ENCODE measurements at regions of chr22 and their contacts with region 1.

Region 1: GRCh38 chr22:37472418-37473006 is 13.7 kb downstream of the MFNG start:
- DNase-seq: peak; percentile 30 to 66 (median 37)
- H3K4me3 ChIP-seq: no peak overlapping the region
- H3K4me3 Mint-ChIP-seq: no peak overlapping the region
- H3K27ac ChIP-seq: no peak overlapping the region
- H3K27ac Mint-ChIP-seq: peak overlapping the region in 6 of 8 donors; percentile 17 to 87 (median 54)
- H3K4me1 ChIP-seq: no peaks in the 10 kb centered on the region
- H3K4me1 Mint-ChIP-seq: peaks cover 8 to 16% (median 10%) of the 10 kb centered on the region in 3 donors
- H3K27me3 ChIP-seq: no peaks in the 10 kb centered on the region
- H3K27me3 Mint-ChIP-seq: no peaks in the 10 kb centered on the region

Region 2: GRCh38 chr22:37428649-37429586 is 43.6 kb before region 1 on chr22:
- CTCF ChIA-PET with region 1: no interaction called
- POLR2A ChIA-PET with region 1: no interaction called
- DNase-seq: peak; percentile 42 to 73 (median 51)
- H3K4me3 ChIP-seq: no peak overlapping the region
- H3K4me3 Mint-ChIP-seq: peak overlapping the region in 3 of 7 donors; percentile 6 to 55 (median 32)
- H3K27ac ChIP-seq: no peak overlapping the region
- H3K27ac Mint-ChIP-seq: peak overlapping the region in 1 of 8 donors; percentile 7
- H3K4me1 ChIP-seq: peaks cover 6% of the 10 kb centered on the region
- H3K4me1 Mint-ChIP-seq: peaks cover 3 to 22% (median 6%) of the 10 kb centered on the region in 3 donors
- H3K27me3 ChIP-seq: peaks cover 31% of the 10 kb centered on the region
- H3K27me3 Mint-ChIP-seq: peaks cover 61 to 78% of the 10 kb centered on the region in 2 donors

Region 3: DNA sequence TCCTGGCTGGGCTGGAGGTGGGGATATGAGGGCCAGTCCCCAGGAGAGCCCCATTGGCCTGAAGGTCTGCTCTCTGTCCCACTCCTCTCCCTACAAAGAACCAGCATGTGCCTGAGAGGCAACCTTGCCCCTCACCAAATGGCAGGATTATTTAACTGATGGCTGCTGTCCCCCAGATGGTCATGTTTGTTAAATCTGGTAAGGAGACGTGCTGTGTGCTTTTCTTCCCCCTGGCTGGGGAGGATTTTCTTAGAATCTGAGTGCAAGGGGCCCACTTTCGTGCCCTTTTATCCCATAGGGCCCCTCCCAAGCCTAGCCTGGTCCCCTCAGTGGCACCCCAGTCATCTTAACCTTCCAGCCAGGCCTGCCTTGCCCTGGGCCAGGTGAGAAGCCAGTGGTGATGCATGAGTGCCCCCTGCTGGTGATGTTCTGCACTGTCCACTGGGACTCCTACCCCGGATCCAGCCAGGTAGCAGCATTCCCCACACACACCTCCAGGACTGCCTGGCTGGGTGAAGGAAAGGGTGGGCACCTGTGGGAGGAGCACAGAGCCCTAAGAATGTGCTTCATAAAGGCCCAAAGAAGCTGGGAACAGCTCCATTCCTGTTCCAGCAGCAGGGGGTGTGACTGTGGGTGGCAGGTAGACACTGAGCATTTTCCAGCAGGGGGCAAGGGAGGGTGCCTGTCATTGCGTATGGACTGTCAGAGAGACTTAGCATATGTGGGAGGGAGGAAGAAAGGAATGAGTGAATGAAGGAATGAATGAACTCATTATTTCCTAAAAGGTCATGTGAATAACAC is 15.2 kb before region 1 on chr22:
- CTCF ChIA-PET with region 1: interaction called, 11 read pairs
- POLR2A ChIA-PET with region 1: no interaction called
- DNase-seq: peak; percentile 64 to 86 (median 75)
- H3K4me3 ChIP-seq: no peak overlapping the region
- H3K4me3 Mint-ChIP-seq: no peak overlapping the region
- H3K27ac ChIP-seq: no peak overlapping the region
- H3K27ac Mint-ChIP-seq: no peak overlapping the region
- H3K4me1 ChIP-seq: no peaks in the 10 kb centered on the region
- H3K4me1 Mint-ChIP-seq: peaks cover 0 to 10% (median 4%) of the 10 kb centered on the region in 3 donors
- H3K27me3 ChIP-seq: no peaks in the 10 kb centered on the region
- H3K27me3 Mint-ChIP-seq: no peaks in the 10 kb centered on the region

Region 4: GRCh38 chr22:37486224-37486845 is 13.8 kb after region 1 on chr22 and contains the start of gene MFNG:
- CTCF ChIA-PET with region 1: interaction called, 71 read pairs
- POLR2A ChIA-PET with region 1: interaction called, 5 read pairs
- DNase-seq: peak; percentile 64 to 83 (median 70)
- H3K4me3 ChIP-seq: peak within 1 kb of the TSS; percentile 95
- H3K4me3 Mint-ChIP-seq: peak within 1 kb of the TSS; percentile 90 to 98 (median 94)
- H3K27ac ChIP-seq: peak within 1 kb of the TSS; percentile 76
- H3K27ac Mint-ChIP-seq: peak within 1 kb of the TSS; percentile 89 to 99 (median 98)
- H3K4me1 ChIP-seq: peaks cover 63% of the 10 kb centered on the region
- H3K4me1 Mint-ChIP-seq: peaks cover 47 to 75% (median 59%) of the 10 kb centered on the region in 3 donors
- H3K27me3 ChIP-seq: no peaks in the 10 kb centered on the region
- H3K27me3 Mint-ChIP-seq: no peaks in the 10 kb centered on the region
- total RNA-seq, gene MFNG: 162 to 171 TPM

Region 5: GRCh38 chr22:37492428-37493344 is 20.2 kb after region 1 on chr22:
- CTCF ChIA-PET with region 1: interaction called, 71 read pairs
- POLR2A ChIA-PET with region 1: no interaction called
- DNase-seq: peak; percentile 21 to 66 (median 26)
- H3K4me3 ChIP-seq: no peak overlapping the region
- H3K4me3 Mint-ChIP-seq: peak overlapping the region in 1 of 7 donors; percentile 23
- H3K27ac ChIP-seq: no peak overlapping the region
- H3K27ac Mint-ChIP-seq: peak overlapping the region in 1 of 8 donors; percentile 43
- H3K4me1 ChIP-seq: peaks cover 20% of the 10 kb centered on the region
- H3K4me1 Mint-ChIP-seq: peaks cover 10 to 38% (median 26%) of the 10 kb centered on the region in 3 donors
- H3K27me3 ChIP-seq: no peaks in the 10 kb centered on the region
- H3K27me3 Mint-ChIP-seq: peaks cover 0 to 11% of the 10 kb centered on the region in 2 donors

Region 6: GRCh38 chr22:37519268-37520195 is 47.0 kb after region 1 on chr22 and contains the start of gene CARD10:
- CTCF ChIA-PET with region 1: no interaction called
- POLR2A ChIA-PET with region 1: no interaction called
- DNase-seq: peak in 1 of 5 donors; percentile 15
- H3K4me3 ChIP-seq: peak within 1 kb of the TSS; percentile 28
- H3K4me3 Mint-ChIP-seq: peak within 1 kb of the TSS; percentile 60 to 84 (median 77)
- H3K27ac ChIP-seq: no peak within 1 kb of the TSS
- H3K27ac Mint-ChIP-seq: peak within 1 kb of the TSS in 2 of 8 donors; percentile 7 to 25
- H3K4me1 ChIP-seq: peaks cover 6% of the 10 kb centered on the region
- H3K4me1 Mint-ChIP-seq: peaks cover 6 to 11% (median 7%) of the 10 kb centered on the region in 3 donors
- H3K27me3 ChIP-seq: peaks cover 15% of the 10 kb centered on the region
- H3K27me3 Mint-ChIP-seq: peaks cover 23 to 44% of the 10 kb centered on the region in 2 donors
- total RNA-seq, gene CARD10: 0.29 to 0.31 TPM

Region 7: DNA sequence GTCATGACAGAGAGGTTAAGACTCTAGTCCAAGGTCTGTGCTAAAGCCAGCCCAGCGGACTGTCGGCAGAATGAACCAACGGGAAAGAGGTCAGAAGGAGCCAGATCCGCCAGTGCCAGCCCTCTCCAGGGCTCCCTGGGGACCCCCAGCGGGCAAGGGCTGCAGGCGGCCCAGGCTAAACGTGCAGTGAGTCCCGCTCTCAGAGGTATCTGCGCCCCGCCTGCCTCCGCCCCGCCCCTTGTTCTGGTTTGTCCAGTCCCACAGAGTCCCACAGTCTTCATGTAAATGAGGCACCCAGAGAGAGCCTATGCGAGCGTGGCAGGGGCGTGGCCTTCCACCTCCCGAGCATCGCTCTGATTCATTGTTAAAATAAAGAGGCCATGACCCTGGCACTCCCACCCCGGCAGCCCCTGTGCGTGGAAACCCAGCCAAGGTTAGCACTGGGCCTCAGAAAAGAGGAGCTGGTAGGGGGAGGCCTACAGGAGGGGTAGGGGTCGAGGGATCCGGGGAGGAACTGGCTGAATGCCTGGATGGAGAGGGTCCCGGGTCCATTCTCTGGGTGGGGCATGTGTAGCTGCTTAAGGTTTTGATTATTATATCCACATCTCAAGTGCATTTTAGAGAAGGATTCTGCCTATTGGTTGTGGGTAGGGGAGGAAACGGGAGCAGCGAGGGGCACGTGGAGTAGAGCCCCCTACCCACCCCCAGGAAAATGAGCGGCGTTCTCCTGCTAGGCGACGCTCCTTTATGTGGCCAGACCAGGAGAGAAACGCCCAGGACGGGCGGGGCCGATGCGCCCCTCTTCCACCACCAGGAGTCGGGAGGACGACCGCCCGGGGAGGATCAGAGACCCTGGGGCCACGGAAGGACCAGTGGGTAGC is 224.4 kb after region 1 on chr22 and contains the start of gene TRIOBP:
- CTCF ChIA-PET with region 1: no interaction called
- POLR2A ChIA-PET with region 1: no interaction called
- DNase-seq: peak; percentile 55 to 88 (median 59)
- H3K4me3 ChIP-seq: no peak within 1 kb of the TSS
- H3K4me3 Mint-ChIP-seq: peak within 1 kb of the TSS in 2 of 7 donors; percentile 26 to 38
- H3K27ac ChIP-seq: no peak within 1 kb of the TSS
- H3K27ac Mint-ChIP-seq: peak within 1 kb of the TSS in 3 of 8 donors; percentile 0 to 35 (median 22)
- H3K4me1 ChIP-seq: peaks cover 7% of the 10 kb centered on the region
- H3K4me1 Mint-ChIP-seq: peaks cover 8 to 13% (median 11%) of the 10 kb centered on the region in 3 donors
- H3K27me3 ChIP-seq: no peaks in the 10 kb centered on the region
- H3K27me3 Mint-ChIP-seq: no peaks in the 10 kb centered on the region
- total RNA-seq, gene TRIOBP: 26.1 to 26.7 TPM

Measured in CD8-positive, alpha-beta memory T cell (primary cell).